Motor neuron (in vitro differentiated cells): ENCODE measurements at regions of chr9 and their contacts with region 1.

Region 1: DNA sequence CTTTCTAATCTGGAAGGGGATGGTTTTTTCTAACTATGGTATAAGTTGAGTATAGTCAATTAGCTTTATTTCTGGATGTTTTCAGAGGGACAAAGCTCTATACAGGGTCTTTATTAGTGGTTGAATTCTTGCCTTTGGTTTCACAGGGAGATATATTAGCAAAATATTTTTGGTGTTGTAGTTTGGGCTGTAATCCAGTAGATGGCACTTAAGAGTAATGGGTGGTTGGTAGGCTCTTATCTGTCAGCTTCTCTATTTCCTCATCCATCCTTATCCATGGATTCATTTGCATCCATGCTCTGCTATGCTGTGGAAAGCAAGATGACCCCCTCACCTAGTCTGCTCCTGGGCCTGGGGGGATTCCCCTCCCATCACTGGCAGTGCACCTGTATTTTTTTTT is 363.6 kb upstream of the CYLC2 start:
- ATAC-seq: peak in 1 of 8 experiments; percentile 36
- H3K4me3 ChIP-seq: no peak overlapping the region
- H3K27ac ChIP-seq: no peak overlapping the region
- H3K4me1 ChIP-seq: no peaks in the 10 kb centered on the region

Region 2: DNA sequence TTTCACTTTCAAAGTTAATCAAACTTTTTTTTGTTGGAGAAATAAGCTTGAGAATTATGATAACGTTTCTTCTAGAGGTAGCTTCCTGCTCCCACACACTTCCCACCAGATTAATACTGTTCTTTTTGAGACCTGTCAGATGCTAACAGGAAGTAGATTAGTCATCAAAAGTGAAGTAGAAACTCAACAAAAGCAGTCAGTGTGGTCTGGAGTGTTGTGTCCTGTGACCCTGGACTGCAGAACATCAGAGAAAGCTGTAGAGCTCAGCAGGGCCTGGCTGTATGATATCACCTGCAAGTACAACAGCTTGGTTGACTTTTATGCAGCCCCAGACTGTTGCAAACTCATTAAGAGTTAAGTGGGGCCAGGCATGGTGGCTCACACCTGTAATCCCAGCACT is 132.1 kb before region 1 on chr9:
- in situ Hi-C with region 1: no loop called
- ATAC-seq: no peak
- H3K4me3 ChIP-seq: no peak overlapping the region
- H3K27ac ChIP-seq: no peak overlapping the region
- H3K4me1 ChIP-seq: no peaks in the 10 kb centered on the region

Region 3: DNA sequence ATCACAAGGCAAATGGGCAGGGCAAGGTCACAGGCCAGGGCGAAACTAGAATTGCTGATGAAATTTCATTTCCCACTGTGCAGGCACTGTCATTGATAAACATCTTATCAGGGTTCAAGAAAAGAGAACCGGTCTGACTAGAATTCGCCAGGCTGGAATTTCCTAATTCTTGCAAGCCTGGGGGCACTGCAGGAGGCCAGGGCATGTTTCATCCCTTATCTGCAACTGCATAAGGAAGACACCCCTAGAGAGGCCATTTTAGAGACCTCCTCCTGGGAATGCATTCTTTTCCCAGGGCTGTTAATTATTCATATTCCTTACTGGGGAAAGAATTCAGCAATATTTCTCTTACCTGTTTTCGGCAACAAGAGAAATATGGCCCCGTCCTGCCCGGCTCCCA is 97.4 kb after region 1 on chr9:
- in situ Hi-C with region 1: loop called in 1 of 9 experiments (anchors 25 kb)
- ATAC-seq: no peak
- H3K4me3 ChIP-seq: no peak overlapping the region
- H3K27ac ChIP-seq: no peak overlapping the region
- H3K4me1 ChIP-seq: no peaks in the 10 kb centered on the region